Activated naive CD4-positive, alpha-beta T cell treated with anti-CD3 and anti-CD28 coated beads for 36 hours (primary cell): ENCODE measurements at regions of chr3 and their contacts with region 1.

Region 1: DNA sequence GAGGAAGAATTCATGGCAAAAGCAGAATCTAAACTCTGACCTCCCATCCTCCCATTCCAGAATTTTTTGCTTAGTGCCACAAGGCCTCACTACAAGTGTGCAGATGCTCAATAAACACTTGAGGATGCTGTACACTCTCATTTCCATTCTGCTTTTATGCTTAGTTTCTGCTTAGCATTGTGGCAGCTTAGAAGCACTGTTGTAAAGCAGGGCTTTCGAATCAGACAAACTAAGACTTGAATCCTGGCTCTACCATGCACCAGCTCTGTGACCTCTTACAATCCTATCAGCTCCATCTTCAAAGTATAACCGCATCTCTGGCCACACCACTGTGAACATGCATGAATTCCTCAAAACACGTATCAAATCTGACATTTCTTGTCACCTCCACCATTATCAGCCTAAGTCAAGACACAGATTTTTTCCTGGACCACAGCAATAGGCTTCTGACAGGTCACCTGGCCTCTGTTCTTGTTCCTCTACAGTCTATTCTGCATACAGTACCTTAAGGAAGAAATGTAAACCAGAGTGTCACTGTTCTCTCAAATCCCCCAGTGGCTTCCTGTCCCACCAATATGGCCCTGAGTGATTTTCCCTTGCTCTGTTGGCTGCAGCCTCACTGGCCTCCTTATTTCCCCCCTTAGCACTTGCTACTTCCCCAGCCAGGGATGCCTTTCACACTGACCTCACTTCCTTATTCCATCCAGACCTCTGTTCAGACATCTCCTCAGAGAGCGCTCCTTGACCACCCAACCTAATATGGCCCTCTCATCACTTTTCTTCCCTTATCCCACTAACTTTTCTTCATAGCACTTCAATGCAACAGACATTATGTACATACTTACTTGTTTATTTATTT is 8.1 kb upstream of the PHC3 start:
- DNase-seq: no peak
- H3K4me3 Mint-ChIP-seq: no peak overlapping the region
- H3K27ac Mint-ChIP-seq: no peak overlapping the region
- H3K4me1 Mint-ChIP-seq: peaks cover 11% of the 10 kb centered on the region
- H3K27me3 Mint-ChIP-seq: peaks cover 5% of the 10 kb centered on the region

Region 2: DNA sequence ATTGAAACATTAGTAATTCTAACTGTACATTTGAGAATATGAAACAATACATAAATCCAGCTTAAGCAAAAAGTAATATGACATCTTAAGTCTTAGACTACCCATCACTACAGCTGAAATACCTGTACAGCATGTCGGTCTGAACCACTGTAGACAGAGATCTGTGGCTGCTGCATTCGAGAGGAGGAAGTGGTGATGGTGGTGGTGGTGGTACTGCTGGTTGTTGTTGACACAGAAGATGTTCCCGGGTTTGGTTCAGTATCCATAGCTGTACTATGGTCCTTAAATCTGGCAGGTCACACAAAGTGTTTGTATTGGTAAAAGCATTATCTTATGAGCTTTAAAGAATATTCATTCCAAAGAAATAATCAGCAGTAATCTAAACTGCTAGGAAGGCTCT is 11.0 kb before region 1 on chr3:
- CTCF ChIA-PET with region 1: no interaction called
- intact Hi-C with region 1: no loop called
- DNase-seq: peak; percentile 68
- H3K4me3 Mint-ChIP-seq: peak overlapping the region; percentile 44
- H3K27ac Mint-ChIP-seq: peak overlapping the region; percentile 77
- H3K4me1 Mint-ChIP-seq: peaks cover 36% of the 10 kb centered on the region
- H3K27me3 Mint-ChIP-seq: no peaks in the 10 kb centered on the region

Region 3: GRCh38 chr3:170257145-170257544 is 67.5 kb after region 1 on chr3:
- CTCF ChIA-PET with region 1: interaction called, 4 read pairs
- intact Hi-C with region 1: loop called (anchors 1 kb)
- DNase-seq: peak; percentile 58
- H3K4me3 Mint-ChIP-seq: no peak overlapping the region
- H3K27ac Mint-ChIP-seq: no peak overlapping the region
- H3K4me1 Mint-ChIP-seq: peaks cover 41% of the 10 kb centered on the region
- H3K27me3 Mint-ChIP-seq: no peaks in the 10 kb centered on the region

Region 4: DNA sequence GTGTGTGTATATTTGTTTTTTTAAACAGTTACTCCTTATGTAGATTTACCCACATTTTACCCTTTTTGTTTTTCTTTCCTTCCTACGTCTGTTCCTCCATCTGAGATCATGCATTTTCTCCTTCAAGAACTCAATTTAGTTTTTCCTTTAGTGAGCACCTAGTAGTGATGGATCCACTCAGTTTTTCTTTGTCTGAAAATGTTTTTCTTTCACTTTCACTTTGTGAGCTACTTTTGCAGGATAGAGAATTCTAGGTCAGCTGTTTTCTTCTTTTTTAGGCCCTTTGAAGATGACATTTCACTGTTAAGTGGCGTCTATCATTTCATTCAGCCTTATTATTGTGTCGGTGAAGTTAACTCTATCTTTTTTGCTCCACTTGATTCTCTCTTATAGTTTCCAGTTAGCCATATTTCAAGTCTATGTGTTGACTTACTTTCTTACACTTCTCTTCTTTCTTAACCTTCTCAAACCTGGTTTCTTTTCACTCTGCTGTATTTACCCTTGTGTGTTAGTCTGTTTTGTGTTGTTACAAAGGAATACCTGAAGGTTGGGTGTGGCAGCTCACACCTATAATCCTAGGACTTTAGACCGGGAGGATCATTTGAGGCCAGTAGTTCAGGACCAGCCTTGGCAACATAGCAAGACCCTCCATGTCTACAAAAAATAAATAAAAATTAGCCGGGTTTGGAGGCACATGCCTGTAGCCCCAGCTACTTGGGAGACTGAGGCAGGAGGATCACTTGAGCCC is 88.4 kb after region 1 on chr3:
- CTCF ChIA-PET with region 1: no interaction called
- intact Hi-C with region 1: loop called (anchors 5 kb)
- DNase-seq: no peak
- H3K4me3 Mint-ChIP-seq: peak overlapping the region; percentile 62
- H3K27ac Mint-ChIP-seq: peak overlapping the region; percentile 35
- H3K4me1 Mint-ChIP-seq: peaks cover 19% of the 10 kb centered on the region
- H3K27me3 Mint-ChIP-seq: no peaks in the 10 kb centered on the region

Region 5: GRCh38 chr3:170296703-170297102 is 107.1 kb after region 1 on chr3:
- CTCF ChIA-PET with region 1: no interaction called
- intact Hi-C with region 1: loop called (anchors 5 kb)
- DNase-seq: no peak
- H3K4me3 Mint-ChIP-seq: no peak overlapping the region
- H3K27ac Mint-ChIP-seq: no peak overlapping the region
- H3K4me1 Mint-ChIP-seq: no peaks in the 10 kb centered on the region
- H3K27me3 Mint-ChIP-seq: no peaks in the 10 kb centered on the region

Region 6: DNA sequence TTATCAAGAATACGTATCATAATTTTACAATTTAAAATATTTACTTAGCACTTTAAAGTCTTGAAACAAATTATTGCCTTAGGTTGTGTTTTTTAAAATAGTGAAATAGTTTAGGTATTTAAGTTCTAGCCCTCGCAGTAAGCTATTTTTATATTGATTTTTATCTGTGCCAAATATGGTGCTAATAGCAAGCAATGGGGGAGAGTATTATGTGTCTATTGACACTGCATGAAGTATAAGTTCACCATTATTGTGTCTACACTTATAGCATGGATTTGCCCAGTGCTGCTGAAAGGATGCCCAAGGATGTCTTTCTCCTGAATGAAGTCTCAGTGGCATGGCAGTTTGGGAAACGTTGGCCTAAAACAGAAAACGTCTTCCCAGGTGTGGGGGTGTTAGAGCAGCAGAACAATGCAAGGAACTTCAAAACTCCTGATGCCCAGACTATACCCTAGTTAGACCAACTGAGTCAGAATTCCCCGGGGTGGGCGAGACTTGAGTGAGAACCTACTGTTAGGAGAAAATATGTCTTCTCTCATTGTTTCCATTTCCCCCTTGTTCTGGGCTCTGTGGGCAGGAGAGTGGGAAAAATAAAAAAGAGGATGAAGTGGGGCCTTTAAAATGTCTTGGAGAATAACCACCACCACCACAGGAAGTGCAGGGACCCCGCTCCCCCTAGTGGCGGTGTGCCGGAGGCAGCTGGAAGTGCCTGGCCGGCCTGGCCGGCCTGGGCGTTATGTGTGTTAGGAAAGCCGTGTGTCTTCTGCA is 500.4 kb after region 1 on chr3:
- CTCF ChIA-PET with region 1: no interaction called
- intact Hi-C with region 1: loop called (anchors 5 kb)
- DNase-seq: peak; percentile 59
- H3K4me3 Mint-ChIP-seq: no peak overlapping the region
- H3K27ac Mint-ChIP-seq: no peak overlapping the region
- H3K4me1 Mint-ChIP-seq: peaks cover 3% of the 10 kb centered on the region
- H3K27me3 Mint-ChIP-seq: no peaks in the 10 kb centered on the region

Region 7: DNA sequence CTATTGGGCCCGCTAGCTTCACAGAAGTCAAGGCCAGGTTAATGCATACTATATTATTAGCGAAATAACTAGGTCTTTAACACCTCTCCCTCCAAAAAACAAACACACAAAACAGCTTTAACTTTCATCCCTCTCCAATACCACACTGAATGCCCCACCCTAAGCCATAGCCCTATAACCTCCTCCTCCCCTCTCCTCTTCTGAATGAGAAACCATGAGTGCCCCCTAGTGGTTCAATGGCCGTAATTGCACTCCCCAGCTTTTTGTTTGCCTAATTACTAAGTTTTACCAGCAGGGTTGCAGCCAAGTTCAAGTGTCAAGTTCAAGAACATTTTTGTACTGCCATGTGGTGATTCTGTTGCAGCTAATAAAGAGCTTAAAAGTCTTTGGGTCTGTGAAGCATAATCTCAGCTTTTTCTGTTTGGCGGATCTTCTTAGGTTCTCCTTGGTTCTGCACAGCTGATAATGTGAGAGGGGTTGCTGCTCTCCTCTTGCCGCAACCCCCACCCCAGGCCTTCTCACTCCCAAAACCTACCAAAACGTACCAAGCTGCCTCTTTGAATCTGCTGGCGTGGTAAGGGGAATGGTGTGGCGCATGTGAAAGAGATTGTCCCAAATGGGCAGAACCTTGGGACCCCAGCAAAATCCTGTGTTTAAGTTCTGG is 622.4 kb after region 1 on chr3:
- CTCF ChIA-PET with region 1: interaction called, 3 read pairs
- intact Hi-C with region 1: loop called (anchors 1 kb)
- DNase-seq: peak; percentile 81
- H3K4me3 Mint-ChIP-seq: no peak overlapping the region
- H3K27ac Mint-ChIP-seq: no peak overlapping the region
- H3K4me1 Mint-ChIP-seq: no peaks in the 10 kb centered on the region
- H3K27me3 Mint-ChIP-seq: no peaks in the 10 kb centered on the region